T-cell (primary cell): ENCODE measurements at regions of chr1 and their contacts with region 1.

Region 1: DNA sequence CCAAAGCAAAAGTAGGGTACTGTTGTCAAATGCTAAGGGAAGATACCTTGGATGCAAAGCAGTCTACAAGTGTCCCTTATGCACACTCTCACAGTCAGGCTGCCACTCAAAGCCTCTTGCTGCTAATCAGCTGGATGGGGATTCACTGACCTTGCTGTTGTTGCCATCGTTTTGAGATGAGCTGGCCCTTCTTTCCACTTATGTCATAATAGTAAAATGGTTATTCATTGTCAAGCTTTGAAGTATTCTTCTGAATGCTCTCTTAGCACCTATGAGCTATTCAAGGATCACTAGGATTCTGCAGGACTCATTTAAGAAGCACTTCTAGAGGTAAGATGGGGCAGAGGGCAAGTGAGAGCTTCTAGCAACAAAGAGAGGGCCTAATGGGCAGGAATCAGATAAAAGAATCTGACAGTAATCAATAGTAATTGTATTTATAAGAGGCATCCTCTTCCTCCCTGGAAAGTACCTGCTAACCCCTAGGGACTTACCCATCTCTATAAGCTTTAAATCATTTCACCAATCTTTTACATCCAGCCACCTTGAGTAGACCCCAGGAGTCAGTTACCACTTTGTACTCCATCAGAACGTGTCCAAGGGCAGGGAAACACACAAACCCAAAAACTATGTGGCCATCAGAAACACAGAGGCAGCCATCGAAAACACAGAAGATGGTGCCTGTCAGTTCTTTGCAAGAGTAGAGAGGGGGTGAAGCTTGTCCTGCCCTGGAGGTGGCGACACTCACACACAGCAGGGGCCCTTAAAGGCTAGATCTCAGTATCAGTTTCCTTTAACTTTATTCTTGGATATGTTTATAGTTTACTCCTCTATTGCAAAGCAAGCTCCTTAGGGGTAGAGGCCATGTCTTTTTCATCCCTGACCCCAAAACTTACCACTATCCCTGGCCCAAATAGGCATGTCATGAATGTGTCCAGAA is 103.7 kb upstream of the NFIA start:
- DNase-seq: peak in 27 of 35 experiments; percentile 4 to 51 (median 19)
- ATAC-seq: peak in 3 of 4 experiments; percentile 50 to 57 (median 51)
- H3K4me3 ChIP-seq: no peak overlapping the region
- H3K4me3 Mint-ChIP-seq: no peak overlapping the region
- H3K27ac ChIP-seq: no peak overlapping the region
- H3K27ac Mint-ChIP-seq: no peak overlapping the region
- H3K4me1 ChIP-seq: no peaks in the 10 kb centered on the region
- H3K4me1 Mint-ChIP-seq: no peaks in the 10 kb centered on the region
- H3K27me3 ChIP-seq: no peaks in the 10 kb centered on the region
- H3K27me3 Mint-ChIP-seq: no peaks in the 10 kb centered on the region

Region 2: GRCh38 chr1:61043010-61043820 is 64.5 kb after region 1 on chr1:
- CTCF ChIA-PET with region 1: interaction called in 1 of 2 experiments, 12 read pairs
- POLR2A ChIA-PET with region 1: no interaction called
- DNase-seq: peak; percentile 52 to 87 (median 79)
- ATAC-seq: peak; percentile 88 to 98 (median 92)
- H3K4me3 ChIP-seq: peak overlapping the region; percentile 52 to 71
- H3K4me3 Mint-ChIP-seq: peak overlapping the region; percentile 60 to 75 (median 74)
- H3K27ac ChIP-seq: no peak overlapping the region
- H3K27ac Mint-ChIP-seq: no peak overlapping the region
- H3K4me1 ChIP-seq: peaks cover 0 to 11% of the 10 kb centered on the region in 2 experiments
- H3K4me1 Mint-ChIP-seq: peaks cover 0 to 10% (median 9%) of the 10 kb centered on the region in 3 donors
- H3K27me3 ChIP-seq: peaks cover 0 to 19% of the 10 kb centered on the region in 2 experiments
- H3K27me3 Mint-ChIP-seq: peaks cover 20 to 32% of the 10 kb centered on the region in 2 donors